ENCODE measurements at regions of chr16 and their contacts with region 1.

Region 1: DNA sequence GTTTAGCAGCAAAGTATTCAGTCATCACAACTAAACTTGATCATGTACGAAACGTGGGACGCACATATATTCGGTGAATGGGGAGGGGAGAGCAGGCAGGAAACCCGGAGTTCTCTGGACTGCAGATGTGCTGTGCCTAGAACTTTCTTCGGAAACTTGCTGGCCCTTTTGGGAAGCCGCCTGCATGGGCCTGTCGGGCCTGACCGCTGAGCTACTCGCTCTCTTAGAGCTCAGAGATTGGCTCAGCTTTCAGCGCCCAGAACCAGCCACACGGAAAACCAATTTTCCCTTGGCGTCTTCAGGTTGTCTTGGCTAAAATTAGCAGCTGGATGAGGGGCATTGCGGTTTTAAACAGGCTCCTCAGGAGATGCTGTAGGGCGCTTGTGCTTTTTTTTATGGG is 38.1 kb downstream of the ZDHHC7 start:
- DNase-seq: no peak
- ATAC-seq: no peak
- H3K4me3 Mint-ChIP-seq: no peak overlapping the region
- H3K27ac Mint-ChIP-seq: no peak overlapping the region
- H3K4me1 Mint-ChIP-seq: peaks cover 2% of the 10 kb centered on the region
- H3K27me3 Mint-ChIP-seq: no peaks in the 10 kb centered on the region

Region 2: GRCh38 chr16:84996365-84996764 is 23.1 kb after region 1 on chr16:
- POLR2A ChIA-PET with region 1: interaction called, 10 read pairs
- DNase-seq: no peak
- ATAC-seq: no peak
- H3K4me3 Mint-ChIP-seq: no peak overlapping the region
- H3K27ac Mint-ChIP-seq: no peak overlapping the region
- H3K4me1 Mint-ChIP-seq: peaks cover 6% of the 10 kb centered on the region
- H3K27me3 Mint-ChIP-seq: no peaks in the 10 kb centered on the region